Head of caudate nucleus (tissue), 42 donors: ENCODE measurements at regions of chr12 and their contacts with region 1.

Region 1: GRCh38 chr12:14239350-14239934 is 126.0 kb upstream of the ATF7IP start:
- DNase-seq: peak in 7 of 42 donors; percentile 14 to 49 (median 23)

Region 2: DNA sequence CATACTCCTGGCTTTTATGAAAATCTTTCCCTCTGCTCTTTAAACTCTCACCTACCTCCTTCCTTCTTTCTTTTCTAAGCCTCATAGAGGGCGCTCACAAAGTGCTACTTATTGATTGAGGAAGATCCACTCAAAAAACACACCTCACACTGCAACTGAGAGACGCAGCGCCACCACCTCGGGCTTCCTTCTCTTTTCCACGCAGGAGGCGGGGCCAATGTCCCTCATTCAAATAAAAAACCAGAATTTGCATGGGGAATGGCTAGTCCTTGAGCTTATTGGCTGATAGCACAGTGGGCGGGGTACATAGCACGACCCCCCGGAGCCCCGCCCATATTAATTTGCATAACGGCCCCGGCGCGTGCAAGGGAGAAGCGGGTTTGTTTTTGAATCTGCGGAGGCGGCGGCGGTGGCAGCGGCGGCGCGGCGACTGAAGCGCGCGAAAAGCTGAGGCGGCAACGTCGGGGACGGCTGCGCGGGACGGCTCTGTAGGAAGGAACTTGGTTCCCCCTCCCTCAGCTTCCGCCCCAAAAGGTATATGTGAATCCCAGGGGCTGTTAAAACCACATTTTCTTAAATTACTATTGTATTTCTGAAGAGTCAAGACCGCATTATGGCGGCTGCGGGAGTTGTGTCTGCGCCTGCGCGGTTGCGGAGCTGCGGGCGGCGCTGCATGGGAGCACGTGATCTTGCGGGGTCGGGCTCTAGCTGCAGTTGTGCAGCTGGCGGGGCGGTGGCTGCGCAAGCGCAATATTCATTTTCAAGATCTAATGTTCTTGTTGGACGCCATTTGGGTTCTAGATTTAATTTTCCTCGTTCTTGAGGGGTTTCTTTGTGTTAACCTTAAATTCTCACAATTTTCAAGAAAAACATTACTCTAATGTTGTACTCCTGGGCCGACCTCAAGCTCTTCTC is 126.1 kb after region 1 on chr12 and contains the start of gene ATF7IP:
- intact Hi-C with region 1: loop called (anchors 5 kb)
- DNase-seq: peak; percentile 87 to 98 (median 94)

Region 3: DNA sequence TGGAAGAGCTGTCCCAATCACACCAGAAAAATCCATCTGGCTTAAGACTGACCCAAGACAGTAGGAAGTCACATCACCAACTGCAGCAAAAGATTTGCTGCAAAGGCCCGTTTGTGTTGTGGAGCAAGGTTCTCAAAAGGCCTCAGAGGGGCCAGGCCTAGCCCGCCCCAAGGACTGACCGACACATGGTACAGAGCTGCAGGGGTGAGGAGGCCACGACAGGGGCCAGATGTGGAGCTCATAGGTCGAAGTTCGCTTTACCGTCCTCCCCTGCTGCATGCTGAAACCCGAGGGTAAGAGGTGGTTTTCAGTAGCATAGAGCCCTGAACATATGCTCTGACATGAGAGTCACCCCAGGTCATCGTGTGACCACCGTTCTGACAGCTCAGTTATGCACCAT is 292.7 kb after region 1 on chr12:
- intact Hi-C with region 1: no loop called
- DNase-seq: no peak

Region 4: GRCh38 chr12:14618983-14619382 is 379.5 kb after region 1 on chr12:
- intact Hi-C with region 1: loop called (anchors 10 kb)
- DNase-seq: peak in 14 of 42 donors; percentile 5 to 60 (median 18)

Region 5: GRCh38 chr12:14664510-14664909 is 425.1 kb after region 1 on chr12:
- intact Hi-C with region 1: loop called (anchors 10 kb)
- DNase-seq: peak in 19 of 42 donors; percentile 7 to 69 (median 43)